Endothelial cell of umbilical vein (primary cell): ENCODE measurements at regions of chr14 and their contacts with region 1.

Region 1: GRCh38 chr14:35404449-35405303 is at the start of gene NFKBIA:
- DNase-seq: peak; percentile 90
- H3K4me3 ChIP-seq: peak within 1 kb of the TSS; percentile 74 to 89 (median 76)
- H3K27ac ChIP-seq: peak within 1 kb of the TSS; percentile 97
- H3K4me1 ChIP-seq: peaks cover 45% of the 10 kb centered on the region
- H3K27me3 ChIP-seq: no peaks in the 10 kb centered on the region
- CTCF ChIP-seq: peak; percentile 18 to 28
- POLR2A ChIP-seq: peak; percentile 90
- total RNA-seq, gene NFKBIA: 52.5 and 55.7 TPM in 2 replicates

Region 2: GRCh38 chr14:35140718-35141581 is 263.7 kb before region 1 on chr14:
- CTCF ChIA-PET with region 1: interaction called, 18 read pairs
- POLR2A ChIA-PET with region 1: no interaction called
- dilution Hi-C with region 1: no loop called
- intact Hi-C with region 1: loop called (anchors 1 kb)
- DNase-seq: peak; percentile 51
- H3K4me3 ChIP-seq: no peak overlapping the region
- H3K27ac ChIP-seq: no peak overlapping the region
- H3K4me1 ChIP-seq: no peaks in the 10 kb centered on the region
- H3K27me3 ChIP-seq: no peaks in the 10 kb centered on the region
- CTCF ChIP-seq: no peak
- POLR2A ChIP-seq: no peak

Region 3: DNA sequence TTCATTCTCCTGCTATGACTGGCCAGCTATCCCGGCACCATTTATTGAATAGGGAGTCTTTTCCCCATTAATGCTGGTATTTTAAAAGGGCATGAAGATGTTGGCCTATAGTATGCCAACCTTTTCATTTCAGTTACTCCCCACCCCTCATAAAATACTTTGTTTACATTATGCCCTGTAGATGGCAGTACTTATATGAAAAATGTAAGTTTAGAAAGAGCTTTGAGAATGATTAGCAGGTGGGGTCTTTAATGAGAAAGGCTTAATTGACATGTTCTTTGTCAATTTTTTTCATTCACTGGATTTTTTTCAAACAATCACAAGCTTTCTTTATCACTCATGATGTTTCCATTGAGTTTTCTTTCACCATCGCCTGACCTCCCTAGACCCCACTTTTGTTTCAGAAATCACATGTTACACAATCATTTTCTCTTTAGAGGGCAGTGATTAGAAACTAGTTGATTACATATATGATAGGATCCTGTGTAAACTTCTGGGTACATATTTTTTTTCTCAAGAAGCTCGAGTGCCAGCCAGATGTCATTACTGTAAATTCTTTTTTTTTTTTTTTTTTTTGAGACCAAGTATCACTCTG is 175.1 kb before region 1 on chr14:
- CTCF ChIA-PET with region 1: interaction called, 48 read pairs
- POLR2A ChIA-PET with region 1: interaction called, 3 read pairs
- dilution Hi-C with region 1: no loop called
- intact Hi-C with region 1: loop called (anchors 1 kb)
- DNase-seq: peak; percentile 41
- H3K4me3 ChIP-seq: no peak overlapping the region
- H3K27ac ChIP-seq: no peak overlapping the region
- H3K4me1 ChIP-seq: no peaks in the 10 kb centered on the region
- H3K27me3 ChIP-seq: no peaks in the 10 kb centered on the region
- CTCF ChIP-seq: peak; percentile 9 to 10
- POLR2A ChIP-seq: no peak

Region 4: DNA sequence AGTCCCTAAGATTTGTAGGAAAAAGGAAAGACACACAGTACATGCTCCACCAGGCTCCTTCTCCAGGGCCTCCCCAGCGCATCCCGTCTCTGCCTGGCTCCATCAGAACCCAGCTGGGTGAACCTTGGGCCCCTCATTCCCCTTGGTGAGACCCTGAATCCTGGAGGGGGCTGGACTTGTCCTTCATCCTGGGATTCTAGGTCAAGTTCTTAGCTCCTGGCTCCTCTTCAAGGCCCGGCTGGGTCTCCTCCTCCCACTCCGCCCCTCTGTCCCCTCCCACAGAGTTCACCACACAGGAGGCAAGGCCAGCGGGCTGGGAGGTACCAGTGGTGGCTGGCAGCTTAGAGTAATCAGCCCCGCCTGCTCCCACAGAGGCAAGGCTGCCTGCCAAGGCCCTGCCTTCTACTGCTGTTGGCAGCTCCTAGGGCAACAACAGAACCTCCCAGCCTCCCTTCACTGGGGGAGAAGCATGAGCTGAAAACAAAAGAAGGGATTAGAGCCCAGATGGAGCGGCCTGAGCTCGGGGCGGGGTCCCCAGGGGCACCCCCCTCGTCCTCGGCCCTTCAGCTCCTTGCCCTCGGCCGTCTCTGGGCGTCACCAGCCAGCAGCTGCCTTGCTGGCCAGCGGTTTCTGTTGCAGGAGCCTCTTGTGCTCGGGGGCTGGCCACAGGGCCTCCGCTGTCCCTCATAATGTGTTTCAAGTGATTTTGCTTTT is 63.1 kb before region 1 on chr14:
- CTCF ChIA-PET with region 1: interaction called, 9 read pairs
- POLR2A ChIA-PET with region 1: interaction called, 6 read pairs
- dilution Hi-C with region 1: no loop called
- intact Hi-C with region 1: loop called (anchors 2 kb)
- DNase-seq: peak; percentile 91
- H3K4me3 ChIP-seq: no peak overlapping the region
- H3K27ac ChIP-seq: no peak overlapping the region
- H3K4me1 ChIP-seq: peaks cover 20% of the 10 kb centered on the region
- H3K27me3 ChIP-seq: no peaks in the 10 kb centered on the region
- CTCF ChIP-seq: no peak
- POLR2A ChIP-seq: no peak

Region 5: DNA sequence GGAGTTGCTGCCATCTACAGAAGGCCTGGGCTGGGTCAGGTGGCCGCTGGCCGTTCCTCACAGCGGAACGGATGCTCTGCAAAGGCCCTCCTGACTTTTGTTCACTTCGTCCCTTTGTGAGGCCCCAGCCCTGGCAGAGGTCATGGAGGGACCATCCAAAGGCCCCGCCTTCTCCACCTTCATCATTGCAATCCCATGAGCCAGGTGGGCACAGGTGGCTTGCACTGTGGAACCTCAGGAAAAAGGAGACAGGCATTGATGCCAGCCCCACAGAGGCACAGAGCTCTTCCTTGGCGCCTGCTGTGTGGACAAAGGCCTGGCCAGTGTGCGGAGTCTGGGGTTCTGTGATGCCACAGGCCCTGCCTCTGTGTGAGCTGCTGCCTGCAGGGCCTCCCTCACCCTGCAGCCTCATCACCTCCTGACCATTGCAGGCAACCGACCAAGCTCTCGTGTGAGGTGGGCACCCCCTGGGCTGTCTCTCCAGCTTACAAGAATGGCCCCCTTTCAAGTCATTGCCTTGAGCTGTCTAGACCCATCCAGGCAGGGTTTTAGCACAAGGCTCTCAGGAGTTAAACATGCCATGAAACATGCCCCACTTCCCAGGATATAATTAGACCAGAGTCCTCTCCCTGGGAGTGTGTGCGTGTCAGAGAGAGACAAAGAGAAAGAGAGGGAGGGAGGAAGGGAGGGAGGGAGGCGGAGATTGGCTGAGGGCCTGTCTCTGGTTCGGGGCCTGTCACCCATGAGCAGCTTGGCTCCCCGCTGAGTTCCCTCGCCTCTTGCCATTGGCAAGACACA is 19.4 kb before region 1 on chr14:
- CTCF ChIA-PET with region 1: interaction called, 12 read pairs
- POLR2A ChIA-PET with region 1: interaction called, 7 read pairs
- dilution Hi-C with region 1: no loop called
- intact Hi-C with region 1: loop called (anchors 1 kb)
- DNase-seq: peak; percentile 37
- H3K4me3 ChIP-seq: no peak overlapping the region
- H3K27ac ChIP-seq: peak overlapping the region; percentile 76
- H3K4me1 ChIP-seq: peaks cover 24% of the 10 kb centered on the region
- H3K27me3 ChIP-seq: no peaks in the 10 kb centered on the region
- CTCF ChIP-seq: no peak
- POLR2A ChIP-seq: no peak